ENCODE measurements at regions of chr3 and their contacts with region 1.

Region 1: DNA sequence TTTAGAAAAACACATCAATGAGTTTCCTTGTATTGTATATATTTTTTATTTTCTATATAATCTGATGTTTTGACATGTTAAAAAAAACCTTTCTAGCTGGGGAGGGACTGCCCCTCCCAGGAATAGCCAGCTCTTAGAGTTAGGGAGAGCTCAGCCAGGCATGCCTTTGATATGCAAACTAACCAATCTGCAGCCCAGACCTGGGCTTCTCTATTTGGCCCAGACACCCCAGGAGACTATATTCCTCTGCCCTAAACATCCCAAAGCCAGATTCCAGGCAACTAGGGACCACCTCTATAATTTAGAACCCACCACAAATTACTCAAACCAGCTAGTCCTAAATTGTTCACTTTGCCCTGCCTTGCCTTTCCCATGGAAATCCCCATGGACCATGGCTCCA is 390.9 kb upstream of the ADAMTS9 start:
- DNase-seq: no peak
- H3K4me3 ChIP-seq: no peak overlapping the region
- H3K27ac ChIP-seq: no peak overlapping the region
- H3K4me1 ChIP-seq: no peaks in the 10 kb centered on the region
- H3K27me3 ChIP-seq: no peaks in the 10 kb centered on the region
- CTCF ChIP-seq: no peak
- POLR2A ChIP-seq: no peak

Region 2: GRCh38 chr3:64501298-64501906 is 577.3 kb before region 1 on chr3:
- intact Hi-C with region 1: no loop called
- DNase-seq: no peak
- H3K4me3 ChIP-seq: no peak overlapping the region
- H3K27ac ChIP-seq: no peak overlapping the region
- H3K4me1 ChIP-seq: no peaks in the 10 kb centered on the region
- H3K27me3 ChIP-seq: no peaks in the 10 kb centered on the region
- CTCF ChIP-seq: no peak
- POLR2A ChIP-seq: no peak

Region 3: DNA sequence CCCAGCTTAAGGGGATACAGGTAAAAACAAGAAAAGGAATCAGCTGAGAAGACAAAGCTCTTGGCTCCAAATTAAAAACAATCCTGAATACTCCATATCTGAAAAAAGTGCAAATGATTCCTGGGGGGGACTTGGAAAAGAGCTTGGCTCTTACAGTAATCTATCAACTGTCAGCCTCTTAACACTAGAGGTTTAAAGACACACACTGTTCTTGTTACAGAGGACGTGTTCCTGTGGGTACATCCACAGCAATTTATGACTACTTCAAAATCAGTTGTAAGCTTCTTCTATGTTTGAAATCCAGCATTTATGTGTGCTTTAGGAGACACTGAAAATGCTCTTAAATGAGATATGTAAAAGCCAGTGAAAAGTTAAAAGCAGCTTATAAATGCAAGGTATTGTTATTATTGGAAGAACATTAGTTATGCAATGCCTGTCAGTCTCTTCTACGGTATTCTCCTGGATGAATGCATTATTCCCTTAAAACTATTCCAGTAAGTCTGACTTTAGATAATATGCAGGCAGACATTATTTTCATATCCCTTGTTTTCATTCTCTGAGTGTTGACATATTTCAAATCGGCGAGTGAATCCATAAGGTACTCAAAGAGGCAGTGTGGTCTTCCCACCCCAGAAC is 17.5 kb after region 1 on chr3:
- intact Hi-C with region 1: loop called (anchors 1 kb)
- DNase-seq: no peak
- H3K4me3 ChIP-seq: no peak overlapping the region
- H3K27ac ChIP-seq: no peak overlapping the region
- H3K4me1 ChIP-seq: no peaks in the 10 kb centered on the region
- H3K27me3 ChIP-seq: no peaks in the 10 kb centered on the region
- CTCF ChIP-seq: no peak
- POLR2A ChIP-seq: no peak

Measured in breast epithelium (tissue), 4 donors.